ENCODE measurements at regions of chr3 and their contacts with region 1.

Region 1: DNA sequence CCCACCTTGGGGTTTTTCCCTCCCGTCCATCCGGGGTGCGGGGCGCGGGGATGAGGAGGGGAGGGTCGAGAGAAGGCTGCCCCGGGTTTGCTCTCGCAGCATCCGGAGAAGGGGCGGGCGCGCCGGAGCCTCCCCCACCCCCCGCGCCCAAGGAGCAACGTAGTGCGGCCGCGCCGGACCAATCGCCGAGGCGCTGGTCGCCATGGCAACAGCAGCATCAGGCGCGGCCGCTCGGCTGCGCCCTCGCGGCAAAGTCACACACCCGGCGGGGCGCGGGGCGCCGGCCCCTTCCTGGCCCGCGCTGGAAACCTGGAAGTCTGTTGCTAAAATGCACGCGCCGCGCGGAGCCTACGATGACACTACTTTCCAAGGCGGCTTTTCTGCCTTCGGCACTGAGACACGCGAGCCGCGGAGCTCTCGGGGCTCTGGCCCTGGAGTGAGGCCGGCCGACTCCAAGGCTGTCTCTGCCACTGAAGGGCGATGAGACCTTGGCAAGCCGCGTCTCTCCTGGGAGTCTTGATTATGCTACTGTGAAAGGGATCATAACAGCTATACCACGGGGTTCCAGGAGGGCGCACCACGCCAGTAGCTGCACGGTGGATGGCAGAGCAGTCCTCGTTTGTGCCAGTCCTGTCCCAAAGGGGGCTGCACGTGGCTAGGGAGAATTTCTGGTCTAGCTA is at the start of gene IQSEC1:
- DNase-seq: peak; percentile 16 to 83
- H3K4me3 ChIP-seq: peak within 1 kb of the TSS; percentile 44 to 58
- H3K27ac ChIP-seq: peak within 1 kb of the TSS; percentile 11 to 16
- H3K4me1 ChIP-seq: peaks cover 14 to 30% of the 10 kb centered on the region in 2 donors
- H3K27me3 ChIP-seq: no peaks in the 10 kb centered on the region
- CTCF ChIP-seq: no peak
- total RNA-seq, gene IQSEC1: 148 TPM

Region 2: GRCh38 chr3:13022348-13023234 is 50.9 kb before region 1 on chr3:
- intact Hi-C with region 1: loop called (anchors 2 kb)
- DNase-seq: peak; percentile 75 to 93
- H3K4me3 ChIP-seq: peak overlapping the region in 1 of 2 donors; percentile 54
- H3K27ac ChIP-seq: peak overlapping the region; percentile 74 to 88
- H3K4me1 ChIP-seq: peaks cover 20 to 54% of the 10 kb centered on the region in 2 donors
- H3K27me3 ChIP-seq: no peaks in the 10 kb centered on the region
- CTCF ChIP-seq: no peak

Region 3: DNA sequence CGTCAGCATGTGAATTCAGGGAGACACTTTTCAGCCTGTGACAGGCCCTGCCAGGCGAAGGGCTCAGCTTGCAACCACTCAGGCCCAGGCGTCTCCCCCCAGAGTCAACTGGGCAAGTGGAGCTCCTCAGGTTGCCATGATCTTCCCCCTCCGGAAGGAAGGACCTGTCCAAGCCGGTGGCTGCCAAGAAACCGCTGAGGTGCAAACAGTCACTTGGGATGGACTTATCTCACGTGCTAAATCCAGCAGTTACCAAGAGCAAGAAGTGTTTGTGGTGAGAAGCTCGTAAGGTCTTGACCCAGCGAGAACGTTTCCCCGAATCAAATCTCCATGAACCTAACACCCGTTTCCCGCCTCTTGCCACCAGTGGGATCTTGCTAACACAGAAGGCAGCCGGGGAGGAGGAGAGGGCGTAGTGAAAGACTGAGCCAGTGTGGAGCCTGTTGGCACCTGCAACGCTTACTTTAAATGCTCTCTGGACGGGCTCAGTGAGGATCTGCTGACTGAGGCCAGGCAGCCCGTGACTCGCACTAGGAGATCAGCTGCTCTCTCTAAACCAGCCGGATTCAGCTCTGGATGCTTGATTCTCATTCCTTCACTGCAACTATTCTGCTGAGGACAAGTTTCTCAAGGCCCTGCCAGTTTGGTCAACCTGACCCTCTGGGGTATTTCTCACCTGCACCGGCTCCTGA is 39.2 kb before region 1 on chr3:
- intact Hi-C with region 1: no loop called
- DNase-seq: no peak
- H3K4me3 ChIP-seq: no peak overlapping the region
- H3K27ac ChIP-seq: no peak overlapping the region
- H3K4me1 ChIP-seq: no peaks in the 10 kb centered on the region
- H3K27me3 ChIP-seq: no peaks in the 10 kb centered on the region
- CTCF ChIP-seq: no peak